ENCODE measurements at regions of chr4 and their contacts with region 1.

Region 1: GRCh38 chr4:7101692-7102515 is 34.0 kb upstream of the GRPEL1 start:
- DNase-seq: peak; percentile 63 to 74
- ATAC-seq: peak; percentile 60 to 87 (median 76)
- H3K4me3 ChIP-seq: peak overlapping the region in 9 of 10 donors; percentile 48 to 81 (median 72)
- H3K27ac ChIP-seq: peak overlapping the region in 6 of 10 donors; percentile 77 to 89 (median 88)
- H3K4me1 ChIP-seq: peaks cover 3 to 29% (median 22%) of the 10 kb centered on the region in 9 donors
- H3K27me3 ChIP-seq: no peaks in the 10 kb centered on the region
- CTCF ChIP-seq: peak; percentile 60 to 88 (median 83)

Region 2: GRCh38 chr4:7156761-7157488 is 55.0 kb after region 1 on chr4:
- intact Hi-C with region 1: loop called in 2 of 10 experiments (anchors 2 to 5 kb)
- DNase-seq: peak in 1 of 2 donors; percentile 49
- ATAC-seq: peak; percentile 51 to 77 (median 54)
- H3K4me3 ChIP-seq: no peak overlapping the region
- H3K27ac ChIP-seq: peak overlapping the region in 5 of 10 donors; percentile 0 to 85 (median 72)
- H3K4me1 ChIP-seq: peaks cover 5 to 30% (median 17%) of the 10 kb centered on the region in 9 donors
- H3K27me3 ChIP-seq: no peaks in the 10 kb centered on the region
- CTCF ChIP-seq: peak; percentile 23 to 75 (median 64)

Region 3: GRCh38 chr4:7186061-7186461 is 84.2 kb after region 1 on chr4:
- intact Hi-C with region 1: loop called in 1 of 10 experiments (anchors 10 kb)
- DNase-seq: no peak
- ATAC-seq: peak in 3 of 8 donors; percentile 21 to 59 (median 37)
- H3K4me3 ChIP-seq: no peak overlapping the region
- H3K27ac ChIP-seq: no peak overlapping the region
- H3K4me1 ChIP-seq: no peaks in the 10 kb centered on the region
- H3K27me3 ChIP-seq: peaks cover 0 to 45% (median 44%) of the 10 kb centered on the region in 7 donors
- CTCF ChIP-seq: peak in 7 of 9 donors; percentile 23 to 44 (median 31)